ENCODE measurements at regions of chr17 and their contacts with region 1.

Region 1: DNA sequence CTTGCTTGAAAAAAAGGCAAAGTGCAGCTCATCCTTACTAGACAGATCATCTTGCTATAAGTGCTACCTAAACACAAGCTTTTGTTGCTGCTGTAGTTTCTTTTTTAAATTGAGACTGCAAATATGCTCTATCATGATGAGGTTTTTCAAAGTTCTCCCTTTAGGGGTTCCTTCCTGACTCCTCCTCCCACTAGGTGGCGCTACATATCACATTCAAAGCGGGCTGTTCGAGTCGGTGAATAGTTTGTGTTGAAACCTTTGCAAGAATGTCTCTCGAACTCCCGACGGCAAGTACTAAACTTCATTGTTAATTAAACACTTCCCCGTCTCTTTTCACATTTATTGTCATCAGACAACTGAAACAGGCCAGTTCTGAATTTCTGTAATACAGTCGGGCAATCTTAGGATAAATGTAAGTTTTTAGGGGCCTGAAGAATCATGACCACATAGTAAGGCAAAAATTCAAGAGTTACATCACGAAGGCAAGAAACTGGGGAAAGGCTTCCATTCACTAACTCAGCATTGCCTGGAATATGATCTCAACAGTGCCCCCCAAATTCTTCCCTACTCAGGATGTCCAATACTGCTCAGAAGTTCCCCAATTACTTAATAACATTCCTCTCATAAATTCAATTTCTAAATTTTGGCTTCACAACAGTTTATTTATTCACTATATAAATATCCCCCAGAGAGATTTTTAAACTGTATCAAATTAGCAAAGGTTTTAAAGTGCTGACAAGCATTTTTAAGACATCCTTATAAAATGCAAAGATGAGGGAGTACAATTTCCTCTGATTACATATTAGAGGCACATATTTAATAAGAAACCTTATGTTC is 6.7 kb downstream of the HS3ST3A1 start:
- DNase-seq: peak; percentile 62 to 89 (median 78)
- ATAC-seq: peak; percentile 82
- H3K4me3 ChIP-seq: no peak overlapping the region
- H3K4me3 Mint-ChIP-seq: no peak overlapping the region
- H3K27ac ChIP-seq: no peak overlapping the region
- H3K27ac Mint-ChIP-seq: no peak overlapping the region
- H3K4me1 ChIP-seq: no peaks in the 10 kb centered on the region
- H3K4me1 Mint-ChIP-seq: peaks cover 6% of the 10 kb centered on the region
- H3K27me3 ChIP-seq: peaks cover 7 to 21% of the 10 kb centered on the region in 2 experiments
- H3K27me3 Mint-ChIP-seq: peaks cover 39% of the 10 kb centered on the region
- CTCF ChIP-seq: peak; percentile 85

Region 2: GRCh38 chr17:14203388-14203787 is 608.4 kb after region 1 on chr17:
- CTCF ChIA-PET with region 1: no interaction called
- POLR2A ChIA-PET with region 1: no interaction called
- intact Hi-C with region 1: loop called in 1 of 2 experiments (anchors 10 kb)
- DNase-seq: peak in 11 of 14 experiments; percentile 30 to 74 (median 44)
- ATAC-seq: peak; percentile 45
- H3K4me3 ChIP-seq: no peak overlapping the region
- H3K4me3 Mint-ChIP-seq: peak overlapping the region; percentile 66
- H3K27ac ChIP-seq: peak overlapping the region; percentile 78 to 79
- H3K27ac Mint-ChIP-seq: peak overlapping the region; percentile 94
- H3K4me1 ChIP-seq: peaks cover 86% of the 10 kb centered on the region
- H3K4me1 Mint-ChIP-seq: peaks cover 86% of the 10 kb centered on the region
- H3K27me3 ChIP-seq: no peaks in the 10 kb centered on the region
- H3K27me3 Mint-ChIP-seq: no peaks in the 10 kb centered on the region
- CTCF ChIP-seq: peak; percentile 58

Region 3: DNA sequence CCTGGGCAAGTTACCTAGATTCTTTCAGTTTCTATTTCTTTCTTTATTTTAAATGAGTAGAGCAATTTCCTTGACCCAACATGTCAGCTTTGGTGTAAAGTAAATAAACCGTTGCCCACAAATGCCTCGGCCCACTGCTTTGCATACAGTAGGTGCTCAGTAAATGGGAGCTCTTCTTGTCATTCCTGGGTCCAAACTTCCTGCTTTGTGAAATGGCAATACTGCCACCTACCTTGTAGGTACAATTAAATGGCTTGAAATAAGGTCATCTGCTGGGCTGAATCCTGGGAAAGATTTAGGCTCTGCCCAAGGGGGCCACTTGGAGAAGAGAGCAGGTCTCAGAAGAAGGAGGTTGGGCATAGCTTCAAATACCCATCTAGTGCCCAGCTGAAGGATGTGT is 958.9 kb after region 1 on chr17:
- CTCF ChIA-PET with region 1: no interaction called
- POLR2A ChIA-PET with region 1: no interaction called
- intact Hi-C with region 1: loop called in 1 of 2 experiments (anchors 2 kb)
- DNase-seq: peak in 3 of 14 experiments; percentile 18 to 19 (median 19)
- ATAC-seq: no peak
- H3K4me3 ChIP-seq: no peak overlapping the region
- H3K4me3 Mint-ChIP-seq: no peak overlapping the region
- H3K27ac ChIP-seq: no peak overlapping the region
- H3K27ac Mint-ChIP-seq: no peak overlapping the region
- H3K4me1 ChIP-seq: peaks cover 3% of the 10 kb centered on the region
- H3K4me1 Mint-ChIP-seq: peaks cover 5% of the 10 kb centered on the region
- H3K27me3 ChIP-seq: no peaks in the 10 kb centered on the region
- H3K27me3 Mint-ChIP-seq: no peaks in the 10 kb centered on the region
- CTCF ChIP-seq: peak; percentile 12

Region 4: DNA sequence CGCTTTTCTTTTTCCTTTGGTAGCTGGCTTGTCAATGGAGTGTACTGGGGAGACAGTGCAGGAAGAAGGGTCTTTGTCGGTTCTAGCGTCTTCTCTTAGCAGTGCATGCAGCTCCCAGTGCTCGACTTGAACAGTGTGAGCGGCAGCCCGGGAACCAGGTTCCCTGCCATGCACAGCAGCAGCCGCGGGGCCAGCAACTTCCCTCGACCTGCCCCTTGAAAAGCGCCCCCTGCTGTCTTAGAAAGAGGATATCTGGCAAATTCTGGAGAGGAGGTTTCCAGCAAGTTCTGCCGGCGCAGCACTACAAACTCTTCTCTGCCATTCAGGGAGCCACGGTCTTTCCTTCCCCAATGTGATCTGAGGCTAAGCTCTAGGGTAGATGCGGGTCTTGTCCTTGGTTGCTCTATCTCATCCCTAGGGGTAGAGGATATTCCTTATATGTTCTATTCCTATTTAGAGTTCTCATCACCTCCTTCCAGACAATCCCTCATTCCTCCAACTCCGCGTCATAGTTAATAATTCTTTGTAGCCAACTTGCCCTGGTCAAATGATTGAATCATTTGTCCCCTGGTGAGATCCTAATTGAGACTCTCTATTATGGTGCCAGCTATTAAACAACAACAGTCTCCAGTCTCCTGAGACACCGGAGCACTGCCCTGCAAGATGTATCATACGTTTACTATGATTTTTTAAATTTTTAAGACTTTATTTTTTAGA is 1218.8 kb after region 1 on chr17:
- CTCF ChIA-PET with region 1: no interaction called
- POLR2A ChIA-PET with region 1: no interaction called
- intact Hi-C with region 1: loop called in 1 of 2 experiments (anchors 2 kb)
- DNase-seq: peak in 7 of 14 experiments; percentile 4 to 62 (median 25)
- ATAC-seq: no peak
- H3K4me3 ChIP-seq: no peak overlapping the region
- H3K4me3 Mint-ChIP-seq: no peak overlapping the region
- H3K27ac ChIP-seq: no peak overlapping the region
- H3K27ac Mint-ChIP-seq: no peak overlapping the region
- H3K4me1 ChIP-seq: peaks cover 4% of the 10 kb centered on the region
- H3K4me1 Mint-ChIP-seq: no peaks in the 10 kb centered on the region
- H3K27me3 ChIP-seq: no peaks in the 10 kb centered on the region
- H3K27me3 Mint-ChIP-seq: peaks cover 4% of the 10 kb centered on the region
- CTCF ChIP-seq: peak; percentile 36

Measured in CD4-positive, alpha-beta T cell (primary cell).